ENCODE measurements at regions of chr2 and their contacts with region 1.

Region 1: GRCh38 chr2:29238497-29238896 is 123.3 kb downstream of the CLIP4 start:
- DNase-seq: peak; percentile 65 to 84
- ATAC-seq: peak; percentile 80 to 92
- H3K4me3 ChIP-seq: no peak overlapping the region
- H3K27ac ChIP-seq: no peak overlapping the region
- H3K4me1 ChIP-seq: no peaks in the 10 kb centered on the region
- CTCF ChIP-seq: peak; percentile 64
- EP300 ChIP-seq: no peak
- POLR2A ChIP-seq: no peak
- RAD21 ChIP-seq: peak; percentile 63 to 74

Region 2: DNA sequence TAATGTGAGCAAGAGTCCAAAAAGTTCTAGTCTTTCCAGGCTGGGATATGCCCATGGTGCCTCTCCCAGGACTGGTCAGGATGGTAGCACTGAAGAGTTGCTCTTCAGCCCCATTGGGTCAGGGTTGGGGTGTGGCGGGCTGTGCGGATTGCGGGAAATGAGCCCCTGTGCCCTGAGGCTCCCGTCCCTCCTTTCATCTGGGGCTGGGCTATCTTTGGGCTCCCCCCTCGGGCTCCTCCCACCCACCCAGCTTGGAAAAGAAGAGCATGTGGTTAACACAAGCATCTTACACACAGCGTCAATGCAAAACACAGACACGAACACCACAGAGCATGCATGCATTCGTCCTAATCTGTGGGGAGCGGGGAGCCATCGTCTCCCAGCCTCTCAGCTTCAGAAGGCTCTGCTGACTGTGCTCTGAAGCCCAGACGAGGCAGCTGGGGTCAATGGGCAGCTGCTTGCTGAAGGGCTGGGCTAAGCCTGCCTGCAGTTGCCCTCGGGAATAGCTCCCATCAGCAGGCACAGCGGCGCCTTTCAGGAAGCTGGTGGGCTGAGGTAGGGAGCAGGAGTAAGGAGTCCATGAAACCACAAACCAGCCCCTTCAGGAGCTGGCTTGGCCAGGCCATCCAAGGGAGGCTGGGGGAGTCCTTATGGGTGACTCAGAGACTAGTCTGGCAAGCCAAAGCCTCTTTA is 10.4 kb before region 1 on chr2:
- CTCF ChIA-PET with region 1: interaction called, 10 read pairs
- POLR2A ChIA-PET with region 1: no interaction called
- DNase-seq: no peak
- ATAC-seq: peak; percentile 4 to 48; a peak in 3 of 6 replicates
- H3K4me3 ChIP-seq: 0 out of 3 replicates have a peak overlapping the region, but pooled peaks have one; percentile 4
- H3K27ac ChIP-seq: no peak overlapping the region
- H3K4me1 ChIP-seq: peaks cover 12% of the 10 kb centered on the region; the same call in 1 of the 3 replicates
- CTCF ChIP-seq: no peak
- EP300 ChIP-seq: no peak
- POLR2A ChIP-seq: no peak
- RAD21 ChIP-seq: no peak

Region 3: GRCh38 chr2:29249666-29250253 is 11.3 kb after region 1 on chr2:
- CTCF ChIA-PET with region 1: interaction called, 12 read pairs
- POLR2A ChIA-PET with region 1: no interaction called
- DNase-seq: no peak
- ATAC-seq: no peak
- H3K4me3 ChIP-seq: no peak overlapping the region
- H3K27ac ChIP-seq: no peak overlapping the region
- H3K4me1 ChIP-seq: no peaks in the 10 kb centered on the region
- CTCF ChIP-seq: no peak
- EP300 ChIP-seq: no peak
- POLR2A ChIP-seq: no peak
- RAD21 ChIP-seq: no peak

Measured in A549 (cell line).